MCF 10A (cell line): ENCODE measurements at regions of chr9 and their contacts with region 1.

Region 1: DNA sequence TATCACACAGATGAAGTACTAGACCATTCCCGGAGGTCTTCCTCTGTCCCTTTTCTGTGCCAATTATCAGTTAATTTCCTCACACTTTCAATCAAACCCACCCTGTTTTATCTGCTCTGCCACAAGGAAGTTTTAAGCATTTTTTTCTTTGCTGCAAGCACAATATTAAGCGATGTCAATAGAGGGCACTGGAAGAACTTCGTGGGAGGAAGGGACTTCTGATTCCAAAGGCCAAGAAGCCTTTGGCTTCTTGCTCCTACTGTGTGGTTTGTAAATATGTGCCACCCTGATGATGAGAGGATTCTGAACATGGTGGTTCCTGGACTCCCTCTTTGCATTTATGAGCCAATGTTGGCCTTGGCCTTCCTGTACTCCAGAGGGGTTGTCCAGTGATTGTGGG is 1712.5 kb upstream of the C9orf72 start:
- DNase-seq: peak; percentile 36
- H3K4me3 Mint-ChIP-seq: no peak overlapping the region
- H3K27ac Mint-ChIP-seq: no peak overlapping the region
- H3K4me1 Mint-ChIP-seq: peaks cover 6% of the 10 kb centered on the region
- H3K27me3 Mint-ChIP-seq: no peaks in the 10 kb centered on the region
- CTCF ChIP-seq: peak; percentile 21

Region 2: DNA sequence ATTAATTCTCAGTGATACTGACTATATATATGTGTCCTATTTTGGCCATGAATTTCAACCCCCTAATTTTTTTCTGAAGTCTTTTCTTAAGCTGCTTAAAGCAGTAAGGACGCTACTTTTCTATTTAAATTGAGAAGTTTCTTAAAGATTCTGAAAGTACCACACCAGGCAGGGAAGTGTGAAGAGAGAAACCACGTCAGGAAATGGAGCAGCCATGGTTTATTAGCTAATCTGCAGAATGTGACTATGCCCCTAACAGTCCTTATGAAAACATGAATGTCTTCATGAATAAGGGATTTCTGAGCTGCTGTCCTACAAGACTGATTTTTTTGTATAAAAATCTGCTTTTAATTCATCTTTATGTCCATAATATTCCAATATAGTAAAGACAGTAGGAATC is 11.8 kb after region 1 on chr9:
- CTCF ChIA-PET with region 1: no interaction called
- POLR2A ChIA-PET with region 1: no interaction called
- intact Hi-C with region 1: no loop called
- DNase-seq: no peak
- H3K4me3 Mint-ChIP-seq: no peak overlapping the region
- H3K27ac Mint-ChIP-seq: no peak overlapping the region
- H3K4me1 Mint-ChIP-seq: no peaks in the 10 kb centered on the region
- H3K27me3 Mint-ChIP-seq: no peaks in the 10 kb centered on the region
- CTCF ChIP-seq: no peak

Region 3: GRCh38 chr9:29691758-29692407 is 406.1 kb after region 1 on chr9:
- CTCF ChIA-PET with region 1: no interaction called
- POLR2A ChIA-PET with region 1: no interaction called
- intact Hi-C with region 1: loop called (anchors 1 kb)
- DNase-seq: peak; percentile 73
- H3K4me3 Mint-ChIP-seq: no peak overlapping the region
- H3K27ac Mint-ChIP-seq: no peak overlapping the region
- H3K4me1 Mint-ChIP-seq: no peaks in the 10 kb centered on the region
- H3K27me3 Mint-ChIP-seq: no peaks in the 10 kb centered on the region
- CTCF ChIP-seq: peak; percentile 42

Region 4: GRCh38 chr9:30967484-30967883 is 1681.7 kb after region 1 on chr9:
- CTCF ChIA-PET with region 1: no interaction called
- POLR2A ChIA-PET with region 1: no interaction called
- intact Hi-C with region 1: loop called (anchors 10 kb)
- DNase-seq: peak; percentile 27
- H3K4me3 Mint-ChIP-seq: no peak overlapping the region
- H3K27ac Mint-ChIP-seq: no peak overlapping the region
- H3K4me1 Mint-ChIP-seq: no peaks in the 10 kb centered on the region
- H3K27me3 Mint-ChIP-seq: peaks cover 21% of the 10 kb centered on the region
- CTCF ChIP-seq: peak; percentile 41